ENCODE measurements at regions of chr4 and their contacts with region 1.

Region 1: DNA sequence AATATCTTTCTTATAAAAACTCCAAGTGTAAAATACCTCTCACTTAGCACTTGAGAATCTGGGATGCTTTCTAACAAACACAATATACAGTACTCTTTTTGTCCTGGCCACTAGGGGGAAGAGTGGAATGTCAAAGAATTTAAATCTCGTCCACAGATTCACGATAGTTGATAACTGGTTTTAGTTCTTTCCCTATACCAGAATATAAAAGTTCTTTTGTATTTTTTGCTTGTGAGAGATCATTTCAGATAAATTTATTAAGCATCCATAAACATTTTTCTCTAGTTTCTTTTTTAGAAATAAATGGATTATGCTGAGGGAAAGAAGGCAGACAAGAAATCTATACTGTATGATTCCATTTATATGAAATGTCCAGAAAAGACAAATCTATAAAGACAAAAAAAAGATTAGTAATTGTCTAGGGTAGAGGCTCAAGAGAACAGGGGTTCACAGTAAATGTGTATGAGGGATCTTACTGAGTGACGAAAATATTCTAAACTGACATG is 50.4 kb downstream of the MGARP start:
- DNase-seq: peak in 1 of 2 experiments; percentile 46
- H3K4me3 ChIP-seq: no peak overlapping the region
- H3K4me3 Mint-ChIP-seq: no peak overlapping the region
- H3K27ac Mint-ChIP-seq: no peak overlapping the region
- H3K4me1 ChIP-seq: no peaks in the 10 kb centered on the region
- H3K4me1 Mint-ChIP-seq: no peaks in the 10 kb centered on the region
- H3K27me3 ChIP-seq: no peaks in the 10 kb centered on the region
- H3K27me3 Mint-ChIP-seq: no peaks in the 10 kb centered on the region
- CTCF ChIP-seq: peak; percentile 38 to 70

Region 2: GRCh38 chr4:139184129-139184528 is 45.5 kb before region 1 on chr4:
- CTCF ChIA-PET with region 1: no interaction called
- POLR2A ChIA-PET with region 1: no interaction called
- intact Hi-C with region 1: loop called (anchors 1 kb)
- DNase-seq: no peak
- H3K4me3 ChIP-seq: no peak overlapping the region
- H3K4me3 Mint-ChIP-seq: no peak overlapping the region
- H3K27ac Mint-ChIP-seq: no peak overlapping the region
- H3K4me1 ChIP-seq: peaks cover 8% of the 10 kb centered on the region; the same call in 1 of the 2 replicates
- H3K4me1 Mint-ChIP-seq: peaks cover 10% of the 10 kb centered on the region
- H3K27me3 ChIP-seq: no peaks in the 10 kb centered on the region
- H3K27me3 Mint-ChIP-seq: no peaks in the 10 kb centered on the region
- CTCF ChIP-seq: no peak

Region 3: DNA sequence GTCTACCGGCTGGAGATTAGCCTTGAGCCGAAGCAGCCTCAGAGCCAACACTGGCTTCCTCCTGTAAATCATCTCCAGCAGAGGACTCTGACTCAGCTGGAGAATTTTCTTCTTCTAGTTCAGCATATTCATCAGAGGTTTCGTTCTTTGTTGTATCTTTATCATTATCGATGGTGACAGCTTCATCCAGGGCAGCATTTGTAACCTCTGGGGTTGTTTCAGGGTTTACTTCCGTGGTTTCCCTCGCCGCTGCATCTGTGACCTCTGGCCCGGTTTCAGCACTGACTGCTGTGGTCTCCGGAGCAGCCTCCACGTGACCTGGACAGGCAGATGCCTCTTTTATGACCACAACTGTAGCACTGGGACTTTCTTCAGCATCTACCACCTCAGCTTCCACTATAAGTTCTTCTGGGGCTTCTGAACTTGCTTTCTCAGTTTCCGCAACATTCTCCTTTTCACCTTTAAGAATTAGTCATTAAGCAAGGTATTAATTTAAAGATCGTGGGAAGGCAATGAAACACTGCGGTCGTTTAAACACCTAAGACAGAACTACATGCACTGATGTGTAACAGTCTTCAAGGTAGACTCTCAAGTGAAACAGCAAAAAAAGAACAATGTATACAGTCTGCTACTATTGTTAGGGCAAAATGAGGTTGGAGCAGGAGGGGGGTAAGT is 37.1 kb after region 1 on chr4:
- CTCF ChIA-PET with region 1: no interaction called
- POLR2A ChIA-PET with region 1: interaction called, 7 read pairs
- intact Hi-C with region 1: loop called (anchors 1 kb)
- DNase-seq: peak; percentile 73 to 82
- H3K4me3 ChIP-seq: peak overlapping the region; percentile 31
- H3K4me3 Mint-ChIP-seq: peak overlapping the region; percentile 83
- H3K27ac Mint-ChIP-seq: peak overlapping the region; percentile 85
- H3K4me1 ChIP-seq: peaks cover 18% of the 10 kb centered on the region
- H3K4me1 Mint-ChIP-seq: peaks cover 17% of the 10 kb centered on the region
- H3K27me3 ChIP-seq: no peaks in the 10 kb centered on the region
- H3K27me3 Mint-ChIP-seq: no peaks in the 10 kb centered on the region
- CTCF ChIP-seq: no peak

Region 4: DNA sequence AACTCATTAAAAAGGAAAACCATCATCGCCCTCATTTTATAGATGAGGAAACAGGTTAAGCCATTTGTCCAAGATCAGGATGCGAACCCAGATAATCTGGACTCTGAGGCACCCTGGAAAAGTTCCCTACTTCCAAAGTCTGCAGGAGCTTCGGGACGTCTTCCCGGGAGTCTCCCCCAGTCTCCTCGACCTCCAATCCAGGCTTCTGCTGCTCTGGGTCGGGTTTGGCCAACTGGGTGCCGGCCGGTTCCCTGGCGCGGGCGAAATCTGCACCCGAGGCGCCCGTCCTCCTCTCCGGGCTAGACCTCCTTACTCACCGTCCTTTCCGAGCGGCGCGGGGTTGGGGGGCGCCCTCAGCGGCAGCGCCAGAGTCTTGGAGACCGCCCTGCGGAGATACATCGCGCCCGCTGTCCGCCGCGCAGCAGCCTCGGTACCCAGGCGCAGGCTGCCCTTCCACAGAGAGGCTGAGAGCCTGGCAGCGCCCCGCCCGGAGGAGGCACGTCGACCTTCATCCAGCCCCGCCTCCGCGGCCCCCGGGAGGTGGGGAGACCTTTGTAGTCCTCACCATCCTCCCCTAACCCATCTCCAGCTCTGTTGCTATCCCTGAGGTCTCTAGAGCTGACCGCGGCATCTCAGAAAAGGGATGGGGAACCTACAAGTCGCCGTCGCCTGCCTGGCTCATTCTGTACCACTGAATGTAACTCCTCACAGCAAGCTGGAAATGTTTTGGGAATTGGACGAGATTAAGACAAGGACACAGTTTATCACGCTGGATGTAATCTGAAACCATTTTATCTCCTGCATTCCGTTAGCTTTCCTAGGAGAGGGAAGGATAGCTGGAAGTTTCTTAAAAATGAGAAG is 50.4 kb after region 1 on chr4 and contains the start of gene MGARP:
- CTCF ChIA-PET with region 1: no interaction called
- POLR2A ChIA-PET with region 1: no interaction called
- intact Hi-C with region 1: loop called (anchors 5 kb)
- DNase-seq: no peak
- H3K4me3 ChIP-seq: no peak within 1 kb of the TSS
- H3K4me3 Mint-ChIP-seq: no peak within 1 kb of the TSS
- H3K27ac Mint-ChIP-seq: no peak within 1 kb of the TSS
- H3K4me1 ChIP-seq: peaks cover 21% of the 10 kb centered on the region; the same call in 1 of the 2 replicates
- H3K4me1 Mint-ChIP-seq: peaks cover 6% of the 10 kb centered on the region
- H3K27me3 ChIP-seq: no peaks in the 10 kb centered on the region
- H3K27me3 Mint-ChIP-seq: no peaks in the 10 kb centered on the region
- CTCF ChIP-seq: no peak
- total RNA-seq, gene MGARP: 0.23 and 0.26 TPM in 2 replicates

Region 5: DNA sequence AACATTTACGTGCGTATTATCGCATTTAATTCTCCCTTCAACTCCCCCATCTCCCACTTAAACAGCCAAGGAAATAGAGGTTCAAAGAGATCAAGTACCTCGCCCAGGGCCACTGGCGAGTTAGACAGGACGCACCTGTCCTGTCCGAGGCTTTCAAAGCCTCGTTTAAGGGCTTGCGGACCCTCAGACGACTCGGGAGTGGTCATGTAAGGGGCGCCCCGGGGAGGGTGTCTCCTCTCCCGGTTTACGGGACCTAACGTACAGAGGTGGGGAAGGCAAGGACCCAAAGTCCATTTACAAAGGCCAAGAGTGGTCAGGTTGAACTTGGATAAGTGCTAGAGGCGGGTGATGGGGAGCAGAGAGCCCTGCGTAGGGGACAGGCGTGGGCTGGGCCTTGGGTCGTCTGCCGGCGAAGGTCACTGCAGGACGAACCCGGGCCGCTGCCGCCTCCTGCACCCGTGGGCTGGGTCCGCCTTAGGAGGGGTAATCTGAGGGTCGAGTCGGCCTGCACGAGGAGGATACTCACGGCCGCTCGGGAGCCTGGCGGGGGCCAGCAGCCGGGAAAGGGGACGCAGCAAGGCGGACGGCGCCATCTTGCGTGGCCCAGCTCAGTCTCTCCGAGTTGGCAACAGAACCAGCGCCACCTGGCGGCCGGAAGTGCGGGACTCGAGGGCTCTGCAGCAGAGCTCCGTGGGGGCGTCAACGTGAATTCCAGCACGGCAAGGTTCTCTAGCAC is 65.8 kb after region 1 on chr4:
- CTCF ChIA-PET with region 1: interaction called, 6 read pairs
- POLR2A ChIA-PET with region 1: no interaction called
- intact Hi-C with region 1: loop called (anchors 1 kb)
- DNase-seq: peak; percentile 93 to 96
- H3K4me3 ChIP-seq: peak overlapping the region; percentile 88
- H3K4me3 Mint-ChIP-seq: peak overlapping the region; percentile 86
- H3K27ac Mint-ChIP-seq: peak overlapping the region; percentile 92
- H3K4me1 ChIP-seq: peaks cover 9% of the 10 kb centered on the region; the same call in 1 of the 2 replicates
- H3K4me1 Mint-ChIP-seq: no peaks in the 10 kb centered on the region
- H3K27me3 ChIP-seq: no peaks in the 10 kb centered on the region
- H3K27me3 Mint-ChIP-seq: no peaks in the 10 kb centered on the region
- CTCF ChIP-seq: peak; percentile 87 to 95

Region 6: GRCh38 chr4:139361301-139361700 is 131.7 kb after region 1 on chr4:
- CTCF ChIA-PET with region 1: no interaction called
- POLR2A ChIA-PET with region 1: no interaction called
- intact Hi-C with region 1: no loop called
- DNase-seq: no peak
- H3K4me3 ChIP-seq: no peak overlapping the region
- H3K4me3 Mint-ChIP-seq: no peak overlapping the region
- H3K27ac Mint-ChIP-seq: no peak overlapping the region
- H3K4me1 ChIP-seq: no peaks in the 10 kb centered on the region
- H3K4me1 Mint-ChIP-seq: no peaks in the 10 kb centered on the region
- H3K27me3 ChIP-seq: no peaks in the 10 kb centered on the region
- H3K27me3 Mint-ChIP-seq: no peaks in the 10 kb centered on the region
- CTCF ChIP-seq: no peak